Activated CD4-positive, alpha-beta memory T cell treated with anti-CD3 and anti-CD28 coated beads for 36 hours (primary cell): ENCODE measurements at regions of chr2 and their contacts with region 1.

Region 1: DNA sequence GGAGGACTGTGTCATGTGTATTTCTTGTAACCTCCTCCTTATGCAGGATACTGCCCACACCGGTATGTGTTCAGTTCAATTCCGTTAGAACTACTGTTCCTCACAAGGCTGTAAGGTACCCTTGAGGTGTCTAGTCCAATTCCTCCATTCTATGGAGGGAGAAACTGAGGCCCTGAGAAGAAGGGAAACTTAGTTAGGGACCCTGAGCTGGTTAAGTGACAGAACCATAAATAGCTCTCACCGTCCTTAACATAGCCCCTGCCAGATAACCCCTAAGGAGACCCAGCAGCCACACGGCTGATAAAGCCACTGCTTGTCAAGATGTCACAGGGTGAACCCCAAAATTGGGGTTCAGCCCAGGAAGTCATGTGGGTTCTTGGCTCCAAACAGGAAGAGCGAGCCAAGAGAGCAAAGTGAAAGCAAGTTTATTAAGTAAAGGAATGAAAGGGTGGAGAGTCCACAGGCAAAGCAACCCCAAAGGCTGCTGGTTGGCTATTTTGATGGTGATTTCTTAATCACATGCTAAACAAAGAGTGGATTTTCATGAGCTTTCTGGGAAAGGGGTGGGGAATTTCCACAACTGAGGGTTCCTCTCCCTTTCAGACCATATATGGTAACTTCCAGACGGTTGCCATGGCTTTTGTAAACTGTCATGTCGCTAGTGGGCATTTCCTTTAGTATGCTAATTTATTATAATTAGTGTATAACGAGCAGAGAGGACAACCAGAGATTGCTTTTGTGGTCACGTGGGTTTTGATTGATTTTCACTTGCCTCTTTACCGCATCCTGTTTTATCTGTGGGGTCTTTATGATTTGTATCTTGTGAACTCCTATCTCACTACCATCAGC is 83.4 kb upstream of the RTN4 start:
- DNase-seq: peak; percentile 63
- H3K4me3 Mint-ChIP-seq: peak overlapping the region; percentile 69
- H3K27ac Mint-ChIP-seq: peak overlapping the region; percentile 96
- H3K4me1 Mint-ChIP-seq: peaks cover 17% of the 10 kb centered on the region
- H3K27me3 Mint-ChIP-seq: no peaks in the 10 kb centered on the region

Region 2: GRCh38 chr2:55099878-55100820 is 33.5 kb before region 1 on chr2:
- CTCF ChIA-PET with region 1: no interaction called
- POLR2A ChIA-PET with region 1: no interaction called
- intact Hi-C with region 1: no loop called
- DNase-seq: no peak
- H3K4me3 Mint-ChIP-seq: no peak overlapping the region
- H3K27ac Mint-ChIP-seq: peak overlapping the region; percentile 50
- H3K4me1 Mint-ChIP-seq: peaks cover 13% of the 10 kb centered on the region
- H3K27me3 Mint-ChIP-seq: no peaks in the 10 kb centered on the region

Region 3: DNA sequence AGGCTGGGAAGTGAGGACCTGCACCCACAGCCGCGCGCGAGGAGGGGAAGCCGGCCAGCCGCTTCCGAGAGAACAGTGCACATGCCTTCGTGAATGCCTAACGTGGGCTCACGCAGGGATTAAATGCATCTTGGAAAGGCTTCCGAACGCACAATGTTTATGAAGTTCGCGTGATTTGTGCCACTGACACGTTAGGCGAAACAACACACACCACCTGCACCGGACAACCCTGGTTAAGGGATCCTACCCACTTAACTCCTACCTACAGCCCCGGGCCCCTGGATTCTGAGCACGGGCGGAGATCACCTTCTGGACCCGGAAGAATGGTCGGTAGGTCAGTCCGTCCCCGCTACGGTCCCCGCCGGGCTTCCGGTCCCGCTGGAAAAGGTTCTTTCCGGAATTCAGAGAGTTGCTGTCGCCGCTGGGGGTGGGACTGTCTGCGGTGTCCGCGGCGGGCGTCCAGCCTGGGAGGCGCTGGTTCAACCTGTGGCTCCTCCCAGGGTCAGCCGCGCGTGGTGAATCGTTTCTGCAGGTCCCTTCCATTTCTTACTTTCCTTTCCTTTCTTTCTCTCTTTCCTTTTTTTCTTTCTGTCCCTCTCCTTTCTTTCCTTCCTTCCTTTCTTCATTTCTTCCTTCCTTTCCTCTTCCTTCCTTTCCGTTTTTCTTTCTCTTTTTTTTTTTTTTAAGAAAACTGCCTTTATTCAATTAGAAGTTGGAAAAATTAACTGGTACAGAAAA is 135.4 kb after region 1 on chr2 and contains the start of gene MTIF2:
- CTCF ChIA-PET with region 1: no interaction called
- POLR2A ChIA-PET with region 1: no interaction called
- intact Hi-C with region 1: loop called (anchors 1 kb)
- DNase-seq: peak; percentile 95
- H3K4me3 Mint-ChIP-seq: peak within 1 kb of the TSS; percentile 93
- H3K27ac Mint-ChIP-seq: peak within 1 kb of the TSS; percentile 88
- H3K4me1 Mint-ChIP-seq: peaks cover 7% of the 10 kb centered on the region
- H3K27me3 Mint-ChIP-seq: peaks cover 2% of the 10 kb centered on the region
- total RNA-seq, gene MTIF2: 42.7 to 43.2 TPM